ENCODE measurements at regions of chr2 and their contacts with region 1.

Region 1: GRCh38 chr2:160324161-160324800 is 124.2 kb upstream of the ITGB6 start:
- DNase-seq: peak; percentile 57 to 84 (median 74)
- ATAC-seq: peak; percentile 45 to 54
- H3K4me3 ChIP-seq: no peak overlapping the region
- H3K27ac ChIP-seq: no peak overlapping the region
- H3K4me1 ChIP-seq: peaks cover 9% of the 10 kb centered on the region
- H3K27me3 ChIP-seq: no peaks in the 10 kb centered on the region

Region 2: DNA sequence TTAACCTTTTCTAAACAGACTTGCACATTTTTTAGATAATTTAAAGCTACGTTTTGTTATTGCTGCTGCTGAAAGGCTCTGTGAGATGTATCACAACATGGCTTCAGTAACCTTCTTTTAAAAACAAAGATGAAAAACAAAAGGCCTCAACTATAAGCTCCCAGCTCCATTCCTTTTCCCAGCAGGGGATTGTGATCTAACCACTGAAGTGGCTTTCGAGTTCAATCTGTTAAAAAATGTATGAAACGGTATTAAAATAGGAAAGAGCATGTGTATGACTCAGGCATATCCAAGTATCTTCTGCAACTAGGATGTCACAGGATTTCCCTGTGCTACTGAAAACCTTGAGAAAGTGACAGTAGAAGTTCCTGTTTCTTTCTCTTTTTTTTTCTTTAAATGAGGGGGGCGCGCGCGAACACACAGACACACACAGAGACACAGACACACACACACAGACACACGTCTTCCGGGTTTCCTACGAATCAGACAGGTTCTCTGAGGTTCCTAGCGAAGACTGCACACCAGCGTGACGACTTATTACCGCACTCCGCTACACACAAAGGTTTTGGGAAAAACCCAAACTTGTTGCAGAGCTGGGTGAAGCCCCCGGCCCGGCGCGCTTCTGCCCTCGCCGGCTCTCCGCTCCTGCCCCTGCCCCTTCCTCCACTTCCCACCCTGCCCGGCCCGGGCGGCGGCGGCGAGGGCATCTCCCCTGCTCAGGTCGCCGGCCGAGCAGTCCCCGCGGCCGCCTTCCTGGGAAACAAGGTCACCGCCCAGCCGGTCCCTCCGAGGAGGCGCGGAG is 82.5 kb after region 1 on chr2:
- intact Hi-C with region 1: loop called in 1 of 4 experiments (anchors 10 kb)
- DNase-seq: peak in 2 of 3 donors; percentile 43 to 83
- ATAC-seq: peak; percentile 47 to 55
- H3K4me3 ChIP-seq: peak overlapping the region; percentile 83
- H3K27ac ChIP-seq: peak overlapping the region; percentile 80
- H3K4me1 ChIP-seq: peaks cover 14% of the 10 kb centered on the region
- H3K27me3 ChIP-seq: no peaks in the 10 kb centered on the region

Region 3: GRCh38 chr2:160429248-160430000 is 105.1 kb after region 1 on chr2:
- intact Hi-C with region 1: no loop called
- DNase-seq: no peak
- ATAC-seq: no peak
- H3K4me3 ChIP-seq: no peak overlapping the region
- H3K27ac ChIP-seq: no peak overlapping the region
- H3K4me1 ChIP-seq: peaks cover 4% of the 10 kb centered on the region
- H3K27me3 ChIP-seq: no peaks in the 10 kb centered on the region

Region 4: DNA sequence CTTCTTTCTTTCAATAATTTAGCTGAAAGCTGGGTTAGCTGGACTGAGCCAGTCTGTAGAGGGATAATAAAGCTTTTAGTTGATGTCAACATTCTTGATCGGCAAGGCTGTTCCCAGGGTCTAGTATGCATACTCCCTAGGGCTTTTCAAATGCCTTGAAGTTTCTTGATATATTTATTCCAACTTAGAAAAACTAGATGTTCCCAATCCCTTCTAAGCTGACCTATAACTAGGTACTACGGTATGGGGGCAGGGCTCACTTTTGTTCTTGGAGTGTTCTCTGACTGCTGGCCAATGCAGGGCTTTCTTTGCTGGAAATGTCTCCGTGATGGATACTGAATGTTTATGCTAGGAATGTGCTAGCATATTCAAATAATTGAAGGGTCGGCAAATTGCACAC is 577.3 kb after region 1 on chr2:
- intact Hi-C with region 1: no loop called
- DNase-seq: peak in 1 of 3 donors; percentile 51
- ATAC-seq: peak; percentile 34 to 71
- H3K4me3 ChIP-seq: peak overlapping the region; percentile 10
- H3K27ac ChIP-seq: no peak overlapping the region
- H3K4me1 ChIP-seq: peaks cover 4% of the 10 kb centered on the region
- H3K27me3 ChIP-seq: no peaks in the 10 kb centered on the region

Measured in right cardiac atrium (tissue), 5 donors.